ENCODE measurements at regions of chr22 and their contacts with region 1.

Region 1: GRCh38 chr22:41403532-41404318 is 22.0 kb downstream of the TEF start:
- DNase-seq: peak; percentile 88
- ATAC-seq: peak; percentile 97
- H3K4me3 Mint-ChIP-seq: no peak overlapping the region
- H3K27ac Mint-ChIP-seq: peak overlapping the region; percentile 63; the same call in 1 of the 2 replicates
- H3K4me1 Mint-ChIP-seq: peaks cover 2% of the 10 kb centered on the region; the same call in 1 of the 2 replicates
- H3K27me3 Mint-ChIP-seq: no peaks in the 10 kb centered on the region
- CTCF ChIP-seq: peak; percentile 85

Region 2: GRCh38 chr22:41204992-41205900 is 198.5 kb before region 1 on chr22 and contains the start of gene L3MBTL2:
- CTCF ChIA-PET with region 1: no interaction called
- POLR2A ChIA-PET with region 1: no interaction called
- DNase-seq: peak; percentile 100
- ATAC-seq: peak; percentile 100
- H3K4me3 Mint-ChIP-seq: peak within 1 kb of the TSS; percentile 96
- H3K27ac Mint-ChIP-seq: peak within 1 kb of the TSS; percentile 100
- H3K4me1 Mint-ChIP-seq: peaks cover 14% of the 10 kb centered on the region
- H3K27me3 Mint-ChIP-seq: peaks cover 22% of the 10 kb centered on the region
- CTCF ChIP-seq: no peak
- total RNA-seq, gene L3MBTL2: 25.2 to 28.0 TPM (median 25.6 TPM) in 3 replicates

Region 3: GRCh38 chr22:41341990-41342389 is 61.7 kb before region 1 on chr22:
- CTCF ChIA-PET with region 1: no interaction called
- POLR2A ChIA-PET with region 1: no interaction called
- DNase-seq: no peak
- ATAC-seq: no peak
- H3K4me3 Mint-ChIP-seq: no peak overlapping the region
- H3K27ac Mint-ChIP-seq: no peak overlapping the region
- H3K4me1 Mint-ChIP-seq: no peaks in the 10 kb centered on the region
- H3K27me3 Mint-ChIP-seq: no peaks in the 10 kb centered on the region
- CTCF ChIP-seq: no peak

Region 4: GRCh38 chr22:41381329-41382097 is 22.2 kb before region 1 on chr22 and contains the start of gene TEF:
- CTCF ChIA-PET with region 1: interaction called, 42 read pairs
- POLR2A ChIA-PET with region 1: interaction called, 5 read pairs
- DNase-seq: peak; percentile 99
- ATAC-seq: peak; percentile 90
- H3K4me3 Mint-ChIP-seq: peak within 1 kb of the TSS; percentile 78
- H3K27ac Mint-ChIP-seq: peak within 1 kb of the TSS; percentile 97
- H3K4me1 Mint-ChIP-seq: peaks cover 21% of the 10 kb centered on the region
- H3K27me3 Mint-ChIP-seq: peaks cover 4% of the 10 kb centered on the region
- CTCF ChIP-seq: no peak
- total RNA-seq, gene TEF: 9.8 to 12.0 TPM (median 10.2 TPM) in 3 replicates

Region 5: DNA sequence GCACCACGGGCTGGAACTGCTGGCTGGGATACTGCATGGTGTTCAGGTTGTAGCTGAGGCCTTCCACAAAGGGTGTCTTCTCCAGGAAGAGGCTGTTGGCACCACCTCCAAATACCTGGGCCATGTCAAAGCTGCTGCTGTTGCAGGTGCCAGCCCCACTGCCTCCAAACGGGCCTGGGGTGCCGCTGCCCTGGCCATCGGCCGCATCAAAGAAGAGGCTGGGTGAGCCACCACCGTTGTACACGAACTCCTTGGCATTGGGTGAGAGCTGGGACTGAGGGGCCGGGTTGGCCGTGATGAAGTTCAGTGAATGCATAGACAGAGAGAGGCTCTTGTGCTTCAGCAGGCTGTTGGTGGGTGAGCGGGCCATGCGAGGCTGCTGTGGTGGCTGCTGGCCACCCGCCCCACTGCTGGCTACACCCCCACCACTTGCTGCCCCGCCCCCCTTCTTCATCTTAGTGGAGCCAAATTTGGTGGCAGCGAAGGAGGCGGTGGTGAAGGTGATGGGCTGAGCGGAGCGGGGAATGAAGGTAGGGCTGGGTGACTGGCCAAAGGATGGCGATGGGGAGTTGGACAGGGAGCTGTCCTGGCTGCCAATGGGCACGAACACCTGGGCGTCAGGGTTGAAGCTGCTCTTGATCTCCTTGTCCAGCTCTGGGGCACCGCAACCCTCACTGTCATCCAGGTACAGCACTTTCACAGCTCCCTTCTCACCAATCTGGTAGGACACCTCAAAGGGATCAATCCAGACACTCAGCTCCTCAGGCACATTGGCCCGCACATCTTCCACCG is 32.8 kb after region 1 on chr22:
- CTCF ChIA-PET with region 1: interaction called, 14 read pairs
- POLR2A ChIA-PET with region 1: no interaction called
- DNase-seq: no peak
- ATAC-seq: no peak
- H3K4me3 Mint-ChIP-seq: no peak overlapping the region
- H3K27ac Mint-ChIP-seq: 0 out of 2 replicates have a peak overlapping the region, but pooled peaks have one; percentile 57
- H3K4me1 Mint-ChIP-seq: no peaks in the 10 kb centered on the region
- H3K27me3 Mint-ChIP-seq: no peaks in the 10 kb centered on the region
- CTCF ChIP-seq: no peak

Region 6: DNA sequence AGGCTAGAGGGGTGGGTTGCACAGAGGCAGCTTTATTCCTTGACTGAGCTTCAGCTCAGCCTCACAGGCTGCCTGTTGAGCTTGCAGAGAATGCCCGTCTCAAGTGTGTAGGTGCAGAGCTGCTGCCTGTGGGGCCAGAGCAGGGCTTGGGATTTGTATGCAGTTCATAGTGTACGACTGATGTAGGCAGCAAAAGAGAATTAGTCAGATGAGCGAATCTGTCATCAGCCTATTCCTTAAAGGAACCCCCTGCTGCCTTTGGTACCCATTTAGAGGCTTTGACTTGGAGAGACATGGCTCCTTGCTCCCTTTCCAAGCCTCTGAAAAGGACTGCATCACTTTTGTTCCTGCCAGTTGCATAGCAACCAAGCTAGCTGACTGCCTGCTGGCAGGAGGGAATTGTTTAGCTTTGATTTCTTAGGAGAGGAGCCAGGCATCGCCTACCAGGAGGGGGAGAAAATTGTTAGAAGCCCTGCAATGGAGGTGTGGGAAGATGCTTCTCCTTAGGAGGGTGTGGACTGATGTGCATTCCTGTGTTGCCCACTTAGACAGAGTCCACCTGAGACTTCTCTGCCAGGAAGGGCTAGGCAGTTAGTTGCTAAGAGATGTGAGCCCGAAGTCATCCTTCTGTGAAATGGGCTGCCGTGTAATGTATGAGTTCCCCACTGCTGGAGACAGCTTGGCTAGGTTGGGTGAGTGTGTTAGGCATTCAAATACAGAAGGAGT is 76.1 kb after region 1 on chr22:
- CTCF ChIA-PET with region 1: interaction called, 16 read pairs
- POLR2A ChIA-PET with region 1: no interaction called
- DNase-seq: peak; percentile 15
- ATAC-seq: peak; percentile 48
- H3K4me3 Mint-ChIP-seq: no peak overlapping the region
- H3K27ac Mint-ChIP-seq: peak overlapping the region; percentile 14
- H3K4me1 Mint-ChIP-seq: peaks cover 40% of the 10 kb centered on the region
- H3K27me3 Mint-ChIP-seq: no peaks in the 10 kb centered on the region
- CTCF ChIP-seq: no peak

Region 7: GRCh38 chr22:41526837-41527799 is 123.4 kb after region 1 on chr22:
- CTCF ChIA-PET with region 1: interaction called, 71 read pairs
- POLR2A ChIA-PET with region 1: interaction called, 6 read pairs
- DNase-seq: peak; percentile 76
- ATAC-seq: peak; percentile 64
- H3K4me3 Mint-ChIP-seq: no peak overlapping the region
- H3K27ac Mint-ChIP-seq: no peak overlapping the region
- H3K4me1 Mint-ChIP-seq: no peaks in the 10 kb centered on the region
- H3K27me3 Mint-ChIP-seq: peaks cover 2% of the 10 kb centered on the region; the same call in 1 of the 2 replicates
- CTCF ChIP-seq: peak; percentile 84

Region 8: DNA sequence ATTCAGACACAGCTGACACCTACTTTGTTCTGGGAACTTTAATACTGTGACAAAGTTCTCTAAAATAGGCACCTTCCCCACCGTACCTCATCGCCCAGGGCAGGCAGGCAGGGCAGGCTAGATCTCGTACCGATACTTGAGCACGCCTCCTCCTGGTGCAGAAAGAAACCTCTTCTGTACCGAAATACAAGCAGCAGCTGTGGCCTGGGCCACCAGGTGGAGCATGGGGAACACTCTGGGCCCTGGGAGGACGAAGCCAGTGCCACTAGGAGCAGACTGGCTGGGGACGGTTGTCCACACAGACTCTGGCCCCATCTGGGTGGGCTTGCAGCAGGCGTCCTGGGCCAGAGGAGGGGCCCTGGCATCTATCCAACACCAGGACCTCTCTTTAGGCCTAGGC is 173.2 kb after region 1 on chr22:
- CTCF ChIA-PET with region 1: interaction called, 12 read pairs
- POLR2A ChIA-PET with region 1: no interaction called
- DNase-seq: peak; percentile 87
- ATAC-seq: peak; percentile 95
- H3K4me3 Mint-ChIP-seq: no peak overlapping the region
- H3K27ac Mint-ChIP-seq: peak overlapping the region; percentile 80
- H3K4me1 Mint-ChIP-seq: no peaks in the 10 kb centered on the region
- H3K27me3 Mint-ChIP-seq: no peaks in the 10 kb centered on the region
- CTCF ChIP-seq: peak; percentile 44; the same call in 1 of the 2 replicates